Naive thymus-derived CD8-positive, alpha-beta T cell (primary cell): ENCODE measurements at regions of chr16 and their contacts with region 1.

Region 1: DNA sequence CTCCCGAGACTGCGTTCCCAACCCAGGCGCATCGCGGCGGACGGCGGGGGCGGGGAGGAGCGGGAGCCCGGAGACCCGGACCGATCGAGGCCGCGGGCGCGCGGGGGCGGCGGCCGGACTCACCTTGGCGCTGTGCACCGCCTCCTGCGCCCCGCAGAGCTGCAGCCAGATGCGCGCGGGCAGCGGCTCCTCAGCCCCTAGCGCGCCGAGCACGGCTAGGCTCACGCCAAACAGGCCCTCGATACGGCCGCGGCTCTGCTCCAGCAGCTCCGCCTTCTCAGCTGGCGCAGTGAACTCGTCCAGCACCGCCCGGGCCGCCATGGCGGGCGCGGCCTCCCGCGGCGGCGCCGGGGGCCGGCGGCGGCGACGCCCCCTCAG is 339 bp downstream of the N4BP1 start:
- DNase-seq: no peak
- ATAC-seq: peak; percentile 27 to 37
- H3K4me3 Mint-ChIP-seq: peak overlapping the region in 3 of 10 donors; percentile 43 to 94 (median 46)
- H3K27ac Mint-ChIP-seq: peak overlapping the region in 7 of 10 donors; percentile 85 to 97 (median 95)
- H3K4me1 Mint-ChIP-seq: peaks cover 30 to 42% (median 37%) of the 10 kb centered on the region in 4 donors
- H3K27me3 Mint-ChIP-seq: peaks cover 0 to 2% (median 0%) of the 10 kb centered on the region in 5 donors

Region 2: DNA sequence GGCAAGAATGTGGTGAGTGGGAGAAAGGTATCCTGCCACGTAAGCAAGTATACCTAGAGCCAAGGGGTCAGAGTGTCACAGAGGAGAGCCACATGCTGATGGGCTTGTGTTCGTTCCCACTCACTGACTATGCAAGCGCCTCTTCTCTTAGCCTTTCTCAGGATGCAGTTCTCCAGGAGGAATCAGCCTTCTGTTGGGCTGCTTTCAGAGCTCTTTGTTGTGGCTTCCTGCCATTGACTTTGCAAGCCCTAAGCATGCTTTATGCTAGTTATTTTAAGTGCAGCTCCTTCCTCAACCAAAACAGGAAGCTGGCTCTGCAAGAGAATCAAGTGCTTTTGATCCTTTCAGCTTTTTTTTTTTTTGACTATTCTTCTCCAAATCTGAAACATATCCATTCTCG is 291.0 kb before region 1 on chr16:
- POLR2A ChIA-PET with region 1: interaction called, 12 read pairs
- DNase-seq: peak in 9 of 10 donors; percentile 21 to 78 (median 53)
- ATAC-seq: peak; percentile 95 to 97
- H3K4me3 Mint-ChIP-seq: peak overlapping the region; percentile 61 to 85 (median 74)
- H3K27ac Mint-ChIP-seq: peak overlapping the region in 9 of 10 donors; percentile 66 to 93 (median 83)
- H3K4me1 Mint-ChIP-seq: peaks cover 17 to 53% (median 44%) of the 10 kb centered on the region in 4 donors
- H3K27me3 Mint-ChIP-seq: no peaks in the 10 kb centered on the region

Region 3: DNA sequence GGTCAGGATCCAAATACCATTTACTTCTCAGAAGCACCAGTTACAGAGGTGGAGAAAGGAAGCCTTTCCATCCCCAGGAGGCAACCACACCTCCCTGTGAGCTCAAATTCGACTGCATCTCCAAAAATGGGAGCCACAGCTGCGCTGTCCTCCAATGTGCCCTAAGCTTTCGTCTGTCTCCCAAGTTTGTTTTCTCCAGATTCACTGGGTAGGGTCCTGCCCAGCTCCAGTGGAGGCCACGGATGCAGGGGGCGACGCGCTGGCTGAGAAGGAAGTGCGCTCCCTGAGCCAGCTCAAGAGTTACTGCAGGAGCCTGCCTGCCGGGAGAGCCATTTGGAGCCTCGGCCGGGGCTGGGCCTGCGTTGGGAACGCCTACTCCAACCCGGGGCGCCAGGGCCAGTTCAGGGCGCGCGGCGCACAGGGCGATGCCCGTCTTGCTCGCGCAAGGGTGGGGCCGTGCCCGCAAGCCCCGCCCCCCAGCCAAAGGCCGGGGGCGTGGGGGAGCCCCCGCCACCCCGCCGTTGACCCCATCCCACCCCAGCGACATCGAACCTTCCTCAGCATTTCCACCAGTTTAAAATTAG is 244.0 kb before region 1 on chr16:
- POLR2A ChIA-PET with region 1: interaction called, 17 read pairs
- DNase-seq: peak; percentile 56 to 83 (median 71)
- ATAC-seq: peak; percentile 85 to 93
- H3K4me3 Mint-ChIP-seq: peak overlapping the region; percentile 87 to 96 (median 90)
- H3K27ac Mint-ChIP-seq: peak overlapping the region; percentile 89 to 99 (median 94)
- H3K4me1 Mint-ChIP-seq: peaks cover 23 to 50% (median 38%) of the 10 kb centered on the region in 4 donors
- H3K27me3 Mint-ChIP-seq: no peaks in the 10 kb centered on the region

Region 4: GRCh38 chr16:48385272-48386150 is 224.1 kb before region 1 on chr16 and contains the start of gene SIAH1:
- POLR2A ChIA-PET with region 1: interaction called, 19 read pairs
- DNase-seq: peak; percentile 80 to 95 (median 90)
- ATAC-seq: peak; percentile 78 to 83
- H3K4me3 Mint-ChIP-seq: peak within 1 kb of the TSS; percentile 87 to 99 (median 94)
- H3K27ac Mint-ChIP-seq: peak within 1 kb of the TSS; percentile 80 to 96 (median 92)
- H3K4me1 Mint-ChIP-seq: peaks cover 18 to 31% (median 24%) of the 10 kb centered on the region in 4 donors
- H3K27me3 Mint-ChIP-seq: no peaks in the 10 kb centered on the region
- polyA plus RNA-seq, gene SIAH1: 10.8 to 16.7 (median 12.0) TPM

Region 5: GRCh38 chr16:48583075-48584065 is 26.3 kb before region 1 on chr16:
- POLR2A ChIA-PET with region 1: no interaction called
- DNase-seq: peak in 1 of 10 donors; percentile 10
- ATAC-seq: no peak
- H3K4me3 Mint-ChIP-seq: peak overlapping the region in 1 of 10 donors; percentile 19
- H3K27ac Mint-ChIP-seq: peak overlapping the region; percentile 5 to 75 (median 32)
- H3K4me1 Mint-ChIP-seq: peaks cover 17 to 53% (median 47%) of the 10 kb centered on the region in 4 donors
- H3K27me3 Mint-ChIP-seq: no peaks in the 10 kb centered on the region

Region 6: DNA sequence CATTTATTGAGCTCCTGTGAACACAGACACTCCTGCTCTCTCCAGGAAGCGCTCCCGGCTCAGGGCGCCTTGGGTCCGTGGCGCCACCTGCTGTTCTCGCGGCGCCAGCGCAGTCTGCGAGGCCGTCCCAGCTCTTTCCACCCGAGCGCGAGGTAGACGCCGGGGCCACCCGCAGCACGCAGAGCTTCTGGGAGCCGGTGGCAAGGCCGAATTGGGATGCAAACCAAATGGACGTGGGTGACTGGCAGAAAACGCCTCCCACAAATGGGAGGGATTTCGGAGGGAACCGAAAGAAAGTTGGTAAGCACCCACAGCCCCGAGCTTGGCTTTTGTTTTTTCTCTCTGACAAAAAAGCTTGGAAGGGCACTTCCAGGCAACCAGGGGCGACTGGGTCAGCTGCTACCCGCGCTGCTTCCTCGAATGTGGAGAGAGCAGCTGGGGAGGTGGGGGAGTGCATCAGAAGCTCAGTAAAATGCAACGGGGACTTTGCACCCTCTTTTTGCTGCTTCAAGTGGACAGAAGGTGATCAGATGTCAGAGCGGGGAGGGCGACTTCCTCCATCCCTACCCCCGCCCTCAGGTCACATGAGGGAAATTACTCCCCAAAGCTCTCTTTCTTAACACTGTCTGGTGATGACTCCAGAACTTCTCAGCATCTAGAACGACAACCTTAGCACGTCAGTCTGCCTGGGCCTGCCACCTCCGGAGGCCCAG is 13.8 kb after region 1 on chr16:
- POLR2A ChIA-PET with region 1: interaction called, 123 read pairs
- DNase-seq: peak; percentile 70 to 84 (median 82)
- ATAC-seq: peak; percentile 93 to 96
- H3K4me3 Mint-ChIP-seq: peak overlapping the region; percentile 71 to 90 (median 86)
- H3K27ac Mint-ChIP-seq: peak overlapping the region; percentile 71 to 97 (median 92)
- H3K4me1 Mint-ChIP-seq: peaks cover 15 to 48% (median 30%) of the 10 kb centered on the region in 4 donors
- H3K27me3 Mint-ChIP-seq: no peaks in the 10 kb centered on the region